Thyroid gland (tissue), 4 donors: ENCODE measurements at regions of chr3 and their contacts with region 1.

Region 1: GRCh38 chr3:58419780-58420507 is 13.7 kb downstream of the PDHB start:
- DNase-seq: peak in 1 of 2 donors; percentile 12
- H3K4me3 ChIP-seq: no peak overlapping the region
- H3K27ac ChIP-seq: peak overlapping the region in 2 of 3 donors; percentile 53 to 71
- H3K4me1 ChIP-seq: peaks cover 0 to 23% of the 10 kb centered on the region in 2 donors
- H3K27me3 ChIP-seq: no peaks in the 10 kb centered on the region
- CTCF ChIP-seq: no peak
- POLR2A ChIP-seq: no peak

Region 2: DNA sequence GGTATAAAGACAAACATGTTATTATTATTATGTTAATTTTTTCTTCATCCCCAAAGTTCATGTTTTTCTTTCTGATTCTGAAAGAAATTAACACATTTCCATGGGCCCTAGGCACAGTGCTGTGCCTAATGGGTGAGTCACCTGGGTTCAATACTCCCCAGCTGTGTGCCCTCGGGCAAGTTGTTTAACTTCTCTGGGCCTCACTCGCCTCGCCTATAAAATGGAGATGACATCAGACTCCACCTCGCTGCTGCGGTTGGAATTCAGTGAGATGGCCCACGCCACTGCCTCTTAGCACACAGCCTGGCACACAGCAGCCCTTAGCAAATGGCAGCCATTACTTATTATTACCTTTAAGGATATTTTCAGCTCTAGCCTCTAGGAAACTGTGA is 231.8 kb before region 1 on chr3:
- intact Hi-C with region 1: loop called (anchors 10 kb)
- DNase-seq: no peak
- H3K4me3 ChIP-seq: no peak overlapping the region
- H3K27ac ChIP-seq: peak overlapping the region in 1 of 3 donors; percentile 58
- H3K4me1 ChIP-seq: peaks cover 0 to 10% of the 10 kb centered on the region in 2 donors
- H3K27me3 ChIP-seq: no peaks in the 10 kb centered on the region
- CTCF ChIP-seq: no peak
- POLR2A ChIP-seq: no peak